ENCODE measurements at regions of chr1 and their contacts with region 1.

Region 1: DNA sequence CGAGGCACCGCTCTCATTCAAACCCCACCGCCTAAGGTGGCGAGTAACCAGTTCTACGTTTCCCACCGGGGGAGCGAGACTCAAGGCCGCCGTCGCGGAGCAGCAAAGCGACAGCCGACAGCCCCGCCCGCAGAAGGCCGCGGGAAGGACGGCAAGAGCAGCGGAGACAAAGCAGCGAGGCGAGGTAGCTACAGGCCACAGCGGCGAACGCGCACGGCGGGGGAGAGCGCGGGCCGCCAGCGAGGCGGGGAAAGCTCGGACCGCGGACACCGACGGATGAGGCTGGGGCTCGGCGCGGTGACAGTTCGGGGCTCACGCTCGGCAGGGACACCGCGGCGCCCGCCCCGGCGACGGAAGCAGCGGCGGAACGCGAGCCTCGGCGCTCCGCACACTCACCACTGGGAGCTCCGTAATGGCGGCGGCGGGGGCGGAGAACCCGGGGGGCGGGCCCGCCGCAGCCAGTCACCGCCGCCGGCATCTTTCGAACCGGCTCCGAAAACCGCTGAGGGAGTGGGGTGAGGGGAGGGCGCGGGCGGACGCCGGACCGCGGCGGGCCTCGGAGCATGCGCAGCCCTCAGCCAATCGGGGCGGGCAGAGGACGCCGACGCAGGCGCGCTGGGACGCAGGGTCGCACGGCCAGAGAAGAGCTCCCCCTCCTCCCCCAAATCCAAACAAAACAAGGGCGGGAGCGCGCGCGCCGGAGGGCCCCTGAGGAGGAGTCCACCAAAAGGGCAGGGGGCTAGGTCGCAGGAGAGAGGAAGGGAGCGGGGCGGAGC is 666 bp downstream of the HP1BP3 start:
- DNase-seq: peak; percentile 93 to 99 (median 97)
- ATAC-seq: peak; percentile 86
- H3K4me3 ChIP-seq: peak overlapping the region; percentile 85
- H3K4me3 Mint-ChIP-seq: peak overlapping the region; percentile 90 to 100 (median 98)
- H3K27ac ChIP-seq: peak overlapping the region; percentile 94
- H3K27ac Mint-ChIP-seq: peak overlapping the region; percentile 87 to 99 (median 92)
- H3K4me1 ChIP-seq: peaks cover 28 to 30% of the 10 kb centered on the region in 2 donors
- H3K4me1 Mint-ChIP-seq: peaks cover 16 to 49% (median 36%) of the 10 kb centered on the region in 7 donors
- H3K27me3 ChIP-seq: no peaks in the 10 kb centered on the region
- H3K27me3 Mint-ChIP-seq: peaks cover 0 to 2% (median 0%) of the 10 kb centered on the region in 5 donors

Region 2: DNA sequence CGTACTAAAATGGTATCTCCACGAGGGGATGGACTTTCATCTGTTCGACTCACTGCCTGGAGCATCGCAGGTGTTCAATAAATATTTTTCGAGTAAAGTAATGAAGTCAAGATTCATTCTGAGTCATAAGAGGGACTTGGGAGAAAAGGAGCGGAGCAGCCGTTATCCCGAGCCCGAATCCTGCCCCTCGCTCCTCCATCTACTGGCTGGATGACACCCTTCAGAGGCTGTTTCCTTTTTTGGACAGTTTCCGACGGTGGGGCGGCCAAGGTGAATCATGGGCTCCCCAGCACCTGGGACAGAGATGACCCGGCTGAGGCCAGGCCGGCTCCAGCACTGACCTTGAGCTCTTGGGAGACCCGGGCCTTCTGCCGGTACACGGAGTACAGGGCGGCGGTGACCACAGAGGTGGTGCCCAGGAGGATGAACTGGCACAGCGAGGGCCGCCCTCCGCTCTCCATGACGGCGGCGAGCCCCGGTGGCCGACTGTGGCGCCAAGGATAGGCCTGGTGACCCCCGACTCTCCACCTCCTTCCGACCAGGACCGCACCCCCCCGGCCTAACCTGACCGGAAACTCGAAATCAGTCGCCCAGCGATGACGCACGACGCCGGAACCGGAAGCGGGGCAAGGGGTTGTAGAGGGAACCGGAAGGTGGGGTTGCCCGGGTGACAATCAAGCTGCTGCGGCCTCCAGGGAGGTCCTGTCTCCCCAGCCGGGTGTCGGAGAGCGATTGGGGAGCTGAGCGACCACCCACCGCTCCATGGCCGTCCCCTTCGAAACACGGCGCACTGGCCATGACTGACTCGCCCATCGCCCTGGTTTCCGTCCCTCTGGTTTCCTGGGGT is 278.7 kb before region 1 on chr1 and contains the start of gene MUL1:
- CTCF ChIA-PET with region 1: no interaction called
- POLR2A ChIA-PET with region 1: no interaction called
- intact Hi-C with region 1: loop called in 1 of 2 experiments (anchors 5 kb)
- DNase-seq: peak; percentile 83 to 95 (median 89)
- ATAC-seq: peak; percentile 94
- H3K4me3 ChIP-seq: peak within 1 kb of the TSS; percentile 88
- H3K4me3 Mint-ChIP-seq: peak within 1 kb of the TSS; percentile 83 to 98 (median 88)
- H3K27ac ChIP-seq: peak within 1 kb of the TSS; percentile 97
- H3K27ac Mint-ChIP-seq: peak within 1 kb of the TSS; percentile 72 to 97 (median 92)
- H3K4me1 ChIP-seq: peaks cover 8 to 22% of the 10 kb centered on the region in 2 donors
- H3K4me1 Mint-ChIP-seq: peaks cover 15 to 40% (median 23%) of the 10 kb centered on the region in 7 donors
- H3K27me3 ChIP-seq: no peaks in the 10 kb centered on the region
- H3K27me3 Mint-ChIP-seq: peaks cover 0 to 5% (median 1%) of the 10 kb centered on the region in 5 donors
- total RNA-seq, gene MUL1: 16.5 to 21.5 (median 20.5) TPM

Region 3: DNA sequence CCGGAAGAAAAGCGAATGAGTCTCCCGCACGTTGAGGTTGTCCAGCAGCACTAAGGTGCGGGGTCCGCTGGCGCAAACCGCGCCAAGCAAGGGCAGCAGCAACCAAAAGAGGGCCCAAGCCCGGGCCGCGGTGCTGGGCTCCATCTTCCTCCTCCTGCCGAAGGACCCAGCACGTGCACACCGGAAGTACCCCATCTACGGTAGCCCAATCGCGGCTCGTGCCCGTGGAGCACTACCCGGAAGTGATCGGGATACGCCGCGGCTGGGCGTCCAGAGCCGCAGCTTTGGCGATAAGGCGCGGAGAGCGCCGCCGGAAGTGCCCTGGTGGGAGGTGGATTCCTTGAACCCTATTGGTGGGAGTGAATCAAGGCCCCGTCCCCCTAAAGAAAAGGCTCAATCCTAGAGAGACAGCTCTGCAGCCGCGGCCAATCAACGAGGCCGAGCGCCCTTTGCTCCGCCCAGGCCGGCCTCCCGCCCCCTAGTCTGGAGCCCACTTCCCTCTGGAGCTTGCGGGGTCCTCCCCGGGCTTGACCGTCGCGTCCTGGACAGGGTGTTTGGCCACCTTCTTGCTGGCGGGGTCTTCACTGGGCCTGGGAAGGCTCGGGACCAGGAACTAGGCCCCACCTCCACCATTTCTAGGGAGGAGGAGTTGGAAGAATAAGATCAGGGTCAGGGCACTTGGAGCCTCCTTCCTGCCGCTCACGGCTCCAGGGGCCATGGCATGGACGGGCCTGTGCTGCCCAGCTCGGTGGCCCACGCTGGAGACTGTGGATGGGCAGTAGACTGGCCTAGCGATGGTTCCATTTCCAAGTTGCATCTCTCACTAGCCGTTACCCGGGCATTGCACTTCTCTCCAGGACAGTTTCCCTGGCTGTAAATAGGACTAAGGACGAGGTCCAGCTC is 125.0 kb before region 1 on chr1 and contains the start of gene DDOST:
- CTCF ChIA-PET with region 1: no interaction called
- POLR2A ChIA-PET with region 1: interaction called, 14 read pairs
- intact Hi-C with region 1: loop called (anchors 1 to 2 kb)
- DNase-seq: peak; percentile 78 to 96 (median 94)
- ATAC-seq: peak; percentile 98
- H3K4me3 ChIP-seq: peak within 1 kb of the TSS; percentile 93
- H3K4me3 Mint-ChIP-seq: peak within 1 kb of the TSS; percentile 89 to 99 (median 96)
- H3K27ac ChIP-seq: peak within 1 kb of the TSS; percentile 87
- H3K27ac Mint-ChIP-seq: peak within 1 kb of the TSS; percentile 85 to 99 (median 98)
- H3K4me1 ChIP-seq: peaks cover 21 to 24% of the 10 kb centered on the region in 2 donors
- H3K4me1 Mint-ChIP-seq: peaks cover 31 to 60% (median 41%) of the 10 kb centered on the region in 7 donors
- H3K27me3 ChIP-seq: no peaks in the 10 kb centered on the region
- H3K27me3 Mint-ChIP-seq: no peaks in the 10 kb centered on the region
- total RNA-seq, gene DDOST: 96.9 to 173 (median 109) TPM

Region 4: GRCh38 chr1:20775700-20776099 is 10.7 kb before region 1 on chr1:
- CTCF ChIA-PET with region 1: no interaction called
- POLR2A ChIA-PET with region 1: interaction called, 7 read pairs
- intact Hi-C with region 1: loop called in 1 of 2 experiments (anchors 1 kb)
- DNase-seq: no peak
- ATAC-seq: no peak
- H3K4me3 ChIP-seq: no peak overlapping the region
- H3K4me3 Mint-ChIP-seq: no peak overlapping the region
- H3K27ac ChIP-seq: no peak overlapping the region
- H3K27ac Mint-ChIP-seq: peak overlapping the region in 1 of 9 donors; percentile 41
- H3K4me1 ChIP-seq: peaks cover 0 to 2% of the 10 kb centered on the region in 2 donors
- H3K4me1 Mint-ChIP-seq: peaks cover 11 to 46% (median 39%) of the 10 kb centered on the region in 7 donors
- H3K27me3 ChIP-seq: no peaks in the 10 kb centered on the region
- H3K27me3 Mint-ChIP-seq: no peaks in the 10 kb centered on the region

Region 5: DNA sequence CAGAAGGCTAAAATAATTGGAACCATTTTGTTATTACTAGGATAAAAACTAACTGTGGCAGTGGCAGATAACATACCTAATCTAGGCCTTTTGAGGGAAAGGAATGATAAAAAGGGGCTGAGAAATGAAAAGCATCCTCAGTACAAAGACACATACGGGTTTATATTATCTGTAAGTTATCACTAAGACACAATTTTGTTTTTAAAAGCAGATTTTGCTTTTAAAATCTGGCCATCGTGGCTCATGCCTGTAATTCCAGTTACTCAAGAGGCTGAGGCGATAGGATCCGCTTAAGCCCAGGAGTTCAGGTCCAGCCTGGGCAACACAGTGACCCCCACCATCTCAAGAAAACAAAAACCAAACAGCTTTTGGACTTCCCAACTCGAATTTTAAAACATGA is 25.5 kb after region 1 on chr1:
- CTCF ChIA-PET with region 1: no interaction called
- POLR2A ChIA-PET with region 1: no interaction called
- intact Hi-C with region 1: no loop called
- DNase-seq: no peak
- ATAC-seq: no peak
- H3K4me3 ChIP-seq: no peak overlapping the region
- H3K4me3 Mint-ChIP-seq: no peak overlapping the region
- H3K27ac ChIP-seq: no peak overlapping the region
- H3K27ac Mint-ChIP-seq: no peak overlapping the region
- H3K4me1 ChIP-seq: no peaks in the 10 kb centered on the region
- H3K4me1 Mint-ChIP-seq: no peaks in the 10 kb centered on the region
- H3K27me3 ChIP-seq: no peaks in the 10 kb centered on the region
- H3K27me3 Mint-ChIP-seq: no peaks in the 10 kb centered on the region

Region 6: DNA sequence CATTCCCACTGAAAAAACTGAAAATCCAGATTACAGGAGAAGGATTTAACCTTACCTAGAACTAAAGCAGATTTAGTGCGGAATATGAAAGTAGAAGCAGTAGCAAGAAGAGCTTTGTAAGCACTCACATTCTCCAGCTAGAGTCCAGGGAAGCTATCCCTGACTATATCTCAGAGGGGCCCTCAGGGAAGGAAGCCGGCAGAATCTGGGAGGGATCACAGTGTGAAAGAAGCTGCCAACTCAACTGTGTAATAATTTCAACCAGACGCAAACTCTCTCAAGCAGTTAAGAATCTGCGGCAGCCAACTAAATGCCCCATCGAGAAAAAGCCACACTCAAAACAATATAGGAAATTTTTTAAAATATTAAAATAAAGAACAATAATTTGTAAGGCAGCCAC is 226.5 kb after region 1 on chr1:
- CTCF ChIA-PET with region 1: no interaction called
- POLR2A ChIA-PET with region 1: no interaction called
- intact Hi-C with region 1: no loop called
- DNase-seq: no peak
- ATAC-seq: no peak
- H3K4me3 ChIP-seq: no peak overlapping the region
- H3K4me3 Mint-ChIP-seq: no peak overlapping the region
- H3K27ac ChIP-seq: no peak overlapping the region
- H3K27ac Mint-ChIP-seq: no peak overlapping the region
- H3K4me1 ChIP-seq: no peaks in the 10 kb centered on the region
- H3K4me1 Mint-ChIP-seq: peaks cover 0 to 17% (median 5%) of the 10 kb centered on the region in 7 donors
- H3K27me3 ChIP-seq: no peaks in the 10 kb centered on the region
- H3K27me3 Mint-ChIP-seq: no peaks in the 10 kb centered on the region

Region 7: GRCh38 chr1:21176586-21177555 is 390.4 kb after region 1 on chr1 and contains the start of gene EIF4G3:
- CTCF ChIA-PET with region 1: no interaction called
- POLR2A ChIA-PET with region 1: interaction called, 3 read pairs
- intact Hi-C with region 1: loop called (anchors 1 to 5 kb)
- DNase-seq: peak; percentile 96 to 100 (median 99)
- ATAC-seq: peak; percentile 96
- H3K4me3 ChIP-seq: peak within 1 kb of the TSS; percentile 87
- H3K4me3 Mint-ChIP-seq: peak within 1 kb of the TSS; percentile 83 to 97 (median 91)
- H3K27ac ChIP-seq: peak within 1 kb of the TSS; percentile 75
- H3K27ac Mint-ChIP-seq: peak within 1 kb of the TSS; percentile 87 to 95 (median 92)
- H3K4me1 ChIP-seq: peaks cover 8 to 9% of the 10 kb centered on the region in 2 donors
- H3K4me1 Mint-ChIP-seq: peaks cover 11 to 28% (median 19%) of the 10 kb centered on the region in 7 donors
- H3K27me3 ChIP-seq: no peaks in the 10 kb centered on the region
- H3K27me3 Mint-ChIP-seq: peaks cover 0 to 10% (median 0%) of the 10 kb centered on the region in 5 donors
- total RNA-seq, gene EIF4G3: 15.0 to 46.3 (median 29.1) TPM

Region 8: GRCh38 chr1:21344750-21345443 is 558.5 kb after region 1 on chr1:
- CTCF ChIA-PET with region 1: no interaction called
- POLR2A ChIA-PET with region 1: interaction called, 3 read pairs
- intact Hi-C with region 1: loop called in 1 of 2 experiments (anchors 5 kb)
- DNase-seq: no peak
- ATAC-seq: peak; percentile 33
- H3K4me3 ChIP-seq: peak overlapping the region; percentile 59
- H3K4me3 Mint-ChIP-seq: peak overlapping the region in 8 of 10 donors; percentile 85 to 92 (median 90)
- H3K27ac ChIP-seq: peak overlapping the region; percentile 72
- H3K27ac Mint-ChIP-seq: peak overlapping the region; percentile 47 to 94 (median 88)
- H3K4me1 ChIP-seq: peaks cover 23 to 45% of the 10 kb centered on the region in 2 donors
- H3K4me1 Mint-ChIP-seq: peaks cover 30 to 44% (median 44%) of the 10 kb centered on the region in 7 donors
- H3K27me3 ChIP-seq: no peaks in the 10 kb centered on the region
- H3K27me3 Mint-ChIP-seq: no peaks in the 10 kb centered on the region